Right lobe of liver (tissue), 6 donors: ENCODE measurements at regions of chr16 and their contacts with region 1.

Region 1: DNA sequence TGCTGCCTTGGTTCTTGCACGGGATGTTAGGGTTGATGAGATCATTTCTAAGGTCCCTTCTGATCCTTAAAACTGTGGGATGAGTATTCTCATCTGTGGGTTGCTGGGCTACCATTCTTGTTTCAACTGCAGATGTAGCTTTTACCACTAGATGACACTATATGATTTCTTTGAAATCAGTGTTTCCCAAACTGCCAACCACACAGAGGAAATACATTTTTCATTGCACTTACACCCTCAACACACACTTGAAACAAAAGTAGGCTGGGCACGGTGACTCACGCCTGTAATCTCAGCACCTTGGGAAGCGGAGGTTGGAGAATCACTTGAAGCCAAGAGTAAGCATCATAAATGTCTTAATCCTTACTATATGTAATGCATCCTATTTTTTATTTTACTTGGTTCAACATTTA is 15.3 kb downstream of the LCMT1 start:
- DNase-seq: no peak
- ATAC-seq: peak; percentile 56 to 80 (median 60)
- H3K4me3 ChIP-seq: no peak overlapping the region
- H3K27ac ChIP-seq: no peak overlapping the region
- H3K4me1 ChIP-seq: no peaks in the 10 kb centered on the region
- H3K27me3 ChIP-seq: no peaks in the 10 kb centered on the region
- CTCF ChIP-seq: peak; percentile 49 to 58 (median 56)
- POLR2A ChIP-seq: no peak

Region 2: GRCh38 chr16:25051406-25052150 is 75.2 kb before region 1 on chr16:
- intact Hi-C with region 1: loop called in 1 of 2 experiments (anchors 5 kb)
- DNase-seq: no peak
- ATAC-seq: peak in 3 of 4 donors; percentile 2 to 9 (median 5)
- H3K4me3 ChIP-seq: peak overlapping the region; percentile 17 to 45 (median 42)
- H3K27ac ChIP-seq: peak overlapping the region in 1 of 3 donors; percentile 6
- H3K4me1 ChIP-seq: peaks cover 0 to 12% (median 0%) of the 10 kb centered on the region in 4 donors
- H3K27me3 ChIP-seq: no peaks in the 10 kb centered on the region
- CTCF ChIP-seq: no peak
- POLR2A ChIP-seq: no peak

Region 3: DNA sequence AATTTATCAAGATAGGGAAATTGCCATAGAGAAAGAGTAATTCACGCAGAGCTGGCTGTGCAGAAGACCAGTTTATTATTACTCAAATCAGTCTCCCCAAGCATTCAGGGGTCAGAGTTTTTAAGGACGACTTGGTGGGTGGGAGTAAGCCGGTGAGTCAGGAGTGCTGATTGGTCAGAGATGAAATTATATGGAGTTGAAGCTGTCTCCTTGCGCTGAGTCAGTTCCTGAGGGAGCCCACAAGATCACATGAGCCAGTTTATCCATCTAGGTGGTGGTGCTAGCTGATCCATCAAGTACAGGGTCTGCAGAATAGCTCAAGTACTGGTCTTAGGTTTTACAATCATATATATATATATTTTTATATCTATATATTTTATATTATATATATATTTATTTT is 83.9 kb after region 1 on chr16:
- intact Hi-C with region 1: loop called in 1 of 2 experiments (anchors 5 kb)
- DNase-seq: no peak
- ATAC-seq: no peak
- H3K4me3 ChIP-seq: no peak overlapping the region
- H3K27ac ChIP-seq: no peak overlapping the region
- H3K4me1 ChIP-seq: no peaks in the 10 kb centered on the region
- H3K27me3 ChIP-seq: no peaks in the 10 kb centered on the region
- CTCF ChIP-seq: no peak
- POLR2A ChIP-seq: no peak

Region 4: DNA sequence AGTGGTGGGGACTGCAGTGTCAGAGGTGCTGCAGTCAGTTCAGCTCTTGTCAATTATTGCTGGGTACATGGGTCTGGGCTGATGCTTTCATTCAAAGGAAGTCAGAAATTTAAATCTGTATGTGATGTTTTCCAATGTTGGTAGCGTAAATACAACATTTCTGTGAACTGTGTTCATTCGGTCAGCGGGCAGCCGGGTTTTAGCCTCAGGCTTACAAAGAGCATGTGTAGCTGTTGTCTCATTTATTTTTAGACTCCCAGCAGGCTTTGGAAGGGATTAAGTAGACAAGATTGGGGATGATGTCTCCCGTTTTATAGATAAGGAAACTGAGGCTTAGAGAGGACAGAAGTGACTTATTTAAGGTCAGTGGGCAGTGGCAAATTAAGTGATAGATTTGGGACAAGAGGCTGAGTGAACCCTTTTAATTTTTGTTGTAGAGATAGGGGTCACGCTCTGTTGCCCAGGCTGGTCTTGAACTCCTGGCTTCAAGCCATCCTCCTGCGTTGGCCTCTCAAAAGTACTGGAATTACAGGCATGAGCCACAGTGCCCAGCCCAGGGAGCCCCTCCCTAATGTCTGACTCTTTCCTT is 98.0 kb after region 1 on chr16:
- intact Hi-C with region 1: loop called in 1 of 2 experiments (anchors 10 kb)
- DNase-seq: no peak
- ATAC-seq: no peak
- H3K4me3 ChIP-seq: no peak overlapping the region
- H3K27ac ChIP-seq: no peak overlapping the region
- H3K4me1 ChIP-seq: no peaks in the 10 kb centered on the region
- H3K27me3 ChIP-seq: no peaks in the 10 kb centered on the region
- CTCF ChIP-seq: no peak
- POLR2A ChIP-seq: no peak